ENCODE measurements at regions of chr12 and their contacts with region 1.

Region 1: GRCh38 chr12:101634724-101635123 is 40.0 kb downstream of the MYBPC1 start:
- DNase-seq: no peak
- ATAC-seq: no peak
- H3K4me3 ChIP-seq: no peak overlapping the region
- H3K27ac ChIP-seq: no peak overlapping the region
- H3K4me1 ChIP-seq: peaks cover 11% of the 10 kb centered on the region; the same call in 1 of the 2 replicates
- H3K27me3 ChIP-seq: no peaks in the 10 kb centered on the region
- CTCF ChIP-seq: no peak
- EP300 ChIP-seq: no peak
- POLR2A ChIP-seq: no peak
- RAD21 ChIP-seq: no peak

Region 2: GRCh38 chr12:101648195-101648594 is 13.5 kb after region 1 on chr12:
- CTCF ChIA-PET with region 1: no interaction called
- POLR2A ChIA-PET with region 1: no interaction called
- in situ Hi-C with region 1: no loop called
- intact Hi-C with region 1: loop called (anchors 1 kb)
- DNase-seq: no peak
- ATAC-seq: no peak
- H3K4me3 ChIP-seq: no peak overlapping the region
- H3K27ac ChIP-seq: no peak overlapping the region
- H3K4me1 ChIP-seq: peaks cover 25% of the 10 kb centered on the region
- H3K27me3 ChIP-seq: no peaks in the 10 kb centered on the region
- CTCF ChIP-seq: no peak
- EP300 ChIP-seq: no peak
- POLR2A ChIP-seq: no peak
- RAD21 ChIP-seq: no peak

Region 3: DNA sequence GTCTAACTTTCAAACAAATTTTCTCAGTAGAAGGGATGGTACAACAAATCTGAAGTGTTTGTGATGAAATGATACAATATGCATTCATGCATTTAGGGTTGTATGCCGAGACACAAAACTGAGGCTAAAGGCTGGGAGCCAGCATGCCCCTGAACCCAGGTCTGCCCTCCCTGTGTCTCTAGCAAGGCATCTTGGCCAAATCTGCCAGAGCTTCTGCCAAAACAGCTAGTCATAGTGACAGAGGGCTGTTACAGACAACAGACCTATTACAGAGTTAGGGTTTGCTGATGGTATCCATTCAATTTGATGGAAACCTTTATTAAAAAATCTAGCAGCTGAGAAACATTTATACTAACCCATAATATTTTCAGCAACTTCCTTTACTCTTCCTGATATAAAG is 51.5 kb after region 1 on chr12:
- CTCF ChIA-PET with region 1: no interaction called
- POLR2A ChIA-PET with region 1: no interaction called
- in situ Hi-C with region 1: no loop called
- intact Hi-C with region 1: no loop called
- DNase-seq: no peak
- ATAC-seq: no peak
- H3K4me3 ChIP-seq: no peak overlapping the region
- H3K27ac ChIP-seq: no peak overlapping the region
- H3K4me1 ChIP-seq: peaks cover 8% of the 10 kb centered on the region
- H3K27me3 ChIP-seq: no peaks in the 10 kb centered on the region
- CTCF ChIP-seq: no peak
- EP300 ChIP-seq: no peak
- POLR2A ChIP-seq: no peak
- RAD21 ChIP-seq: no peak

Region 4: GRCh38 chr12:102249077-102249841 is 614.5 kb after region 1 on chr12:
- CTCF ChIA-PET with region 1: no interaction called
- POLR2A ChIA-PET with region 1: no interaction called
- in situ Hi-C with region 1: no loop called
- intact Hi-C with region 1: no loop called
- DNase-seq: no peak
- ATAC-seq: no peak
- H3K4me3 ChIP-seq: no peak overlapping the region
- H3K27ac ChIP-seq: no peak overlapping the region
- H3K4me1 ChIP-seq: no peaks in the 10 kb centered on the region
- H3K27me3 ChIP-seq: no peaks in the 10 kb centered on the region
- CTCF ChIP-seq: no peak
- EP300 ChIP-seq: no peak
- POLR2A ChIP-seq: no peak
- RAD21 ChIP-seq: no peak

Measured in HepG2 (cell line).